ENCODE measurements at regions of chr1 and their contacts with region 1.

Region 1: DNA sequence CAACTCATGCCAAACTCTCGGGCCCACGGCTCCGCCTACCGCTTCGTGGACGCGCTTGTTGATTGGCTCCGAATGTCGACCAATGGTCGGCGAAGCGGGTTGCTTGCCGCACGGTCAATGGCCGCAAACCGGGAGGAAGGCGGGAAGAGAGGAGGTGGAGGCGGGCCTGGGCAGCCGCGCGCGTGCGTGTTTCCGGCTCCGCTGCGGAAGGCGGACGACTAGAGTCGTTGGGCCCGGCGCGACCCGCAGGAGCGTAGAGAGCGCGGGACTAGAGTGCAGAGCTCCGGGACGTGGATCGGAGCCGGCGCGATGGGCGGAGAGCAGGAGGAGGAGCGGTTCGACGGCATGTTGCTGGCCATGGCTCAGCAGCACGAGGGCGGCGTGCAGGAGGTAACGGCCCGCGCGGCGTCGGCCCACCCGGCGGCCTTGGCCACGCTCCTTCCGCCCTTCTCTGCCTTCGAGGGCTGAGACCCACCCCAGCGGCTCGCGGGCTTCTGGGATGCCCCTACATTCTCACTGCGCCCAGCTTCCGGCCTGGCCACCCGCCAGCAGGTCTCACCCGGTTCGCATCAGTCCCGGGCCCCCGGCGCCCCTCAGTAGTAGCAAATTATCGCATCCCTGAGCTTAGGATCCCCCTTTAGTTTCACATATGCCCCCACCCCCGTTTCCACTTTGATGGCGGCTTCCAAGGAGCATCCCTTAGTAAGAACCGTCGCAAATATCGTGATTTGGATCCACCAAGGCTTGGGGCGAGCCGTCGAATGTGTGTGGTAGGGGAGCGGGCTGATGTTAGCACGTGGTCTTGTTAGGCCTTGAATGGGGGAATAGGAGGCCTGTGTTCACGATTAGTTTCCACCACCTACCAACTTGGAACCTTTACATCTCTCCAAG is at the start of gene NUDC:
- DNase-seq: peak; percentile 98
- ATAC-seq: peak; percentile 92
- H3K4me3 ChIP-seq: peak within 1 kb of the TSS; percentile 83
- H3K27ac ChIP-seq: peak within 1 kb of the TSS; percentile 67
- H3K4me1 ChIP-seq: peaks cover 30% of the 10 kb centered on the region
- H3K27me3 ChIP-seq: no peaks in the 10 kb centered on the region
- CTCF ChIP-seq: no peak
- total RNA-seq, gene NUDC: 149 and 198 TPM in 2 replicates

Region 2: GRCh38 chr1:26907071-26907917 is 14.5 kb before region 1 on chr1:
- CTCF ChIA-PET with region 1: no interaction called
- POLR2A ChIA-PET with region 1: no interaction called
- intact Hi-C with region 1: loop called (anchors 2 kb)
- DNase-seq: peak; percentile 96
- ATAC-seq: peak; percentile 100
- H3K4me3 ChIP-seq: no peak overlapping the region
- H3K27ac ChIP-seq: peak overlapping the region; percentile 65
- H3K4me1 ChIP-seq: peaks cover 15% of the 10 kb centered on the region
- H3K27me3 ChIP-seq: no peaks in the 10 kb centered on the region
- CTCF ChIP-seq: no peak

Region 3: DNA sequence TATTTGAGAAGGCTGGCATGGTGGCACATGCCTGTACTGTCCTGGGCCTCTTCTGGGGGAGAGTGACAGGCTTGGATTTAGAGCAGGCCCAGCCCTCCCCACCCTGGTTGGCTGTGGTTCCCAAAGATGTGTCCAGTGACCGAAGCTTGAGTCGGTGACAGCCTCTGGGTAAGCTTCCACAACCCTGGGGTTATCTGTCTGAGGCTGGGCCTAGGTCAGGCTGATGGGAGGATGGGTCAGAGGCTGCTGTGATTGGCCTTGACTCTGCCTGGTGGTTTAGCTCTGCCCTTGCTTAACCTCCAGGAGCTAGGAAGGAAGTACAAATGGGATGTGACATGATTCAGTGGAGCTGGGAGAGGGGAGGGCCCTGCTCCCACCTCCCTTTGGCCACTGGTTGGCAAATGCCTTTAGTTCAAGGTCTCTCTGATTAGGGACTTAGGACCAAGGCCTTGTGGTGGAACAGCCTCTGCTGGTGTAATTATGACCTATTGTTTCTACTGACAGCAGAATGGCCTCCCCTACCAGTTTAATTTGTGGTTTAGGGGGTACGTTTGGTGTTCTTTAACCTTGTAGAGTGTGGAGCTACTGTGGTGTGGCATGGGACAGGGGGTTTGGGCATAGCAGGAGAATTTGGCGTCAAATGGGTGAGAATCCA is 16.3 kb after region 1 on chr1:
- CTCF ChIA-PET with region 1: no interaction called
- POLR2A ChIA-PET with region 1: no interaction called
- intact Hi-C with region 1: no loop called
- DNase-seq: no peak
- ATAC-seq: no peak
- H3K4me3 ChIP-seq: no peak overlapping the region
- H3K27ac ChIP-seq: no peak overlapping the region
- H3K4me1 ChIP-seq: no peaks in the 10 kb centered on the region
- H3K27me3 ChIP-seq: no peaks in the 10 kb centered on the region
- CTCF ChIP-seq: no peak

Region 4: DNA sequence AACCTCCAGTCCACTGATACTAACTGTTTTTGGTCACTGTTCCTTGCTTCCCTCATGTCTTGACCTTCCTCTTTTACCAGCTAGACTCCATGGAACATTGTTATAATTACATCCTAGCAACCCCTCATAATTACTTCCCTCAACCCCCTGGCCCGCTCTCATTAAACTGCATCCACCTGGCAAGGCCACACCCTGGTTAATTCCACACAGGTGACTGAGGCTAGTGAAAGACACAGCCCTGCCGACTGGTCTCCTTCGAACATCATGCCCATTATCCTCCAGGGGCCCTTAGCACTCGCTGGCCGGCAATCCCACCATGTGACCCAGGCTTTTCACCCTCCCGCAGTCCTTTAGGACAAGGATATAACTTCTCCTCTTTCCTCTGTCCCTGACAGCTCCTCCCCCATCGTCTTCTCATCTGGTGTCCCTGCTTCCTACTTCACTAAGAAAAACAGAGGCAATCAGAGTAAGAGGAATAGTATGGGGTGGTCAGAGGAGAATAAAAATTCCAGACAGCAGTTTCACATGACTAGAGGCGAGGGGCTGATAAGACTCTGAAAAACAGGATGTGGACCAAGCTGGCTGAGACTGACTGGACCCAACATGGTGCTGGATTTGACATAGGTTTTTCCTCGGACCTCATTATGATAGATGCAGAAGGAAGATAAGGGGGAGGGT is 99.7 kb after region 1 on chr1:
- CTCF ChIA-PET with region 1: no interaction called
- POLR2A ChIA-PET with region 1: no interaction called
- intact Hi-C with region 1: no loop called
- DNase-seq: no peak
- ATAC-seq: no peak
- H3K4me3 ChIP-seq: no peak overlapping the region
- H3K27ac ChIP-seq: no peak overlapping the region
- H3K4me1 ChIP-seq: no peaks in the 10 kb centered on the region
- H3K27me3 ChIP-seq: no peaks in the 10 kb centered on the region
- CTCF ChIP-seq: no peak

Measured in PC-3 (cell line).